Activated B cell treated with CpG ODN at 0.5 μM for 24 hours (primary cell): ENCODE measurements at regions of chr15 and their contacts with region 1.

Region 1: DNA sequence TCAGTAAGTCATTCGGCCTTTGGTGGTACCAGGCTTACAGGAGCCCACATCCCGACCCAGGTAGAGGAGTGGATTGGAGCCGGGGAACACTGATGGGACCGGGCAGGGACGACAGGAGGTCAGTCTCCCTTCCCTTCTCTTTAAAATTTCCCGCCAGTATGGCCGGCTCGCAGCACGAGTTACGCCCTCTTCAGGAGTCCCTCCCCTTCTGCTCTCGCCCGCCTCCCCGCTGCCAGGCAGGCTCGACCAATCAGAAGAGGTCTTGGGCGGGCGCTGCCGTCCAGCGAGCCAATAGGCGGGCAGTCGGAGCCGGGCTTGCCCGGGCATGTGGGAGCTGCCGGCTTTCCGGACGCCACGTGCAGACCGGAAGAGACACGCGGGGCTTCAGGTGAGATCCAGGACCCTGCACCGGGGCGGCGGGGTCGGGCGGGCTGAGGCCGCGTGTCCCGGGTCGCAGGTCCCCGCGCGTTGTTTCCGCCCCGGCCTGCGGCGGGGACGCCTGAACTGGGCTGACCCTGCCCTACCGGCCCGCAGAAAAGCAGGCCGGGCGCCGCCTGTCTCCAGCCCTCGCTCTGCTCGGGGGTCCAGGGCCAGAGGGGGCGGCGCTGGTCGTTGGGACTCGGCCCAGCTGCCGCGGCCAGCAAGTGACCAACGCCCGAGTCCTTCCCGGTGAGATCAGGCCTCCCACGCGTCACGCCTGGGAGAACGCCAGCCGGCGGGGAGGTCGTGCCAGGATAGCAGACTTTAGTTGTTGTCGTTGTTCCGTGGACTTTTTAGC is at the start of gene AEN:
- DNase-seq: peak; percentile 90
- ATAC-seq: peak; percentile 94
- H3K4me3 Mint-ChIP-seq: peak within 1 kb of the TSS; percentile 87
- H3K27ac Mint-ChIP-seq: peak within 1 kb of the TSS; percentile 92
- H3K4me1 Mint-ChIP-seq: peaks cover 50% of the 10 kb centered on the region
- H3K27me3 Mint-ChIP-seq: peaks cover 2% of the 10 kb centered on the region
- CTCF ChIP-seq: no peak
- total RNA-seq, gene AEN: 40.1 and 41.9 TPM in 2 replicates

Region 2: GRCh38 chr15:88476635-88477060 is 144.5 kb before region 1 on chr15:
- CTCF ChIA-PET with region 1: no interaction called
- POLR2A ChIA-PET with region 1: no interaction called
- intact Hi-C with region 1: loop called (anchors 1 kb)
- DNase-seq: no peak
- ATAC-seq: peak; percentile 28
- H3K4me3 Mint-ChIP-seq: no peak overlapping the region
- H3K27ac Mint-ChIP-seq: no peak overlapping the region
- H3K4me1 Mint-ChIP-seq: peaks cover 8% of the 10 kb centered on the region
- H3K27me3 Mint-ChIP-seq: no peaks in the 10 kb centered on the region
- CTCF ChIP-seq: no peak

Region 3: GRCh38 chr15:88657326-88658069 is 36.3 kb after region 1 on chr15:
- CTCF ChIA-PET with region 1: interaction called, 79 read pairs
- POLR2A ChIA-PET with region 1: interaction called, 42 read pairs
- intact Hi-C with region 1: loop called (anchors 2 kb)
- DNase-seq: no peak
- ATAC-seq: peak; percentile 7
- H3K4me3 Mint-ChIP-seq: no peak overlapping the region
- H3K27ac Mint-ChIP-seq: peak overlapping the region; percentile 94
- H3K4me1 Mint-ChIP-seq: peaks cover 75% of the 10 kb centered on the region
- H3K27me3 Mint-ChIP-seq: no peaks in the 10 kb centered on the region
- CTCF ChIP-seq: no peak

Region 4: GRCh38 chr15:88769161-88769971 is 148.2 kb after region 1 on chr15:
- CTCF ChIA-PET with region 1: no interaction called
- POLR2A ChIA-PET with region 1: no interaction called
- intact Hi-C with region 1: no loop called
- DNase-seq: no peak
- ATAC-seq: no peak
- H3K4me3 Mint-ChIP-seq: no peak overlapping the region
- H3K27ac Mint-ChIP-seq: no peak overlapping the region
- H3K4me1 Mint-ChIP-seq: no peaks in the 10 kb centered on the region
- H3K27me3 Mint-ChIP-seq: peaks cover 34% of the 10 kb centered on the region
- CTCF ChIP-seq: no peak

Region 5: DNA sequence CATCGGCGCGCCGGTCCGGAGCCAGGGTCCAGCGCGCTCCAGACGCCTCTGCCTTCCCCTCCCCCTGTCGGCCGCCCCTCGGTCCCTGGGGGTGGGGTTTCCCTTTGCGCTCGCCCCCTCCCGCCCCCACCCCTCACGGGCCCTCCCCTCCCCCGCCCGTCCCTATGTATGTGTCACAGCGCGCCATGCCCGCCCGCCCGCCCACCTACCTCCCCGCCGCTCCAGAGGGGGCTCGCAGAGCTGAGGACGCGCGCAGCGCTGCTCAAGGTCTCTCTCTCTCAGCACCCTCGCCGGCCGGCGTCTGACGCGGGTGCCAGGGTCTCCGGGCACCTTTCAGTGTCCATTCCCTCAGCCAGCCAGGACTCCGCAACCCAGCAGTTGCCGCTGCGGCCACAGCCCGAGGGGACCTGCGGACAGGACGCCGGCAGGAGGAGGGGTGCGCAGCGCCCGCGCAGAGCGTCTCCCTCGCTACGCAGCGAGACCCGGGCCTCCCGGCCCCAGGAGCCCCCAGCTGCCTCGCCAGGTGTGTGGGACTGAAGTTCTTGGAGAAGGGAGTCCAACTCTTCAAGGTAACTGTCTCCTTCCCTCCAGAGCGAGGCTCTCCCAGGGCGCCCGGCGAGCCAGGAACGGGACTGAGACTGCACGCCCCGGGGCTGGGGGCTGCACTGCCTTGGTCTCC is 182.2 kb after region 1 on chr15 and contains the start of gene ACAN:
- CTCF ChIA-PET with region 1: interaction called, 13 read pairs
- POLR2A ChIA-PET with region 1: no interaction called
- intact Hi-C with region 1: no loop called
- DNase-seq: no peak
- ATAC-seq: no peak
- H3K4me3 Mint-ChIP-seq: peak within 1 kb of the TSS; percentile 68
- H3K27ac Mint-ChIP-seq: no peak within 1 kb of the TSS
- H3K4me1 Mint-ChIP-seq: peaks cover 11% of the 10 kb centered on the region
- H3K27me3 Mint-ChIP-seq: peaks cover 59% of the 10 kb centered on the region
- CTCF ChIP-seq: no peak
- total RNA-seq, gene ACAN: not detected in 2 replicates

Region 6: GRCh38 chr15:88904624-88905327 is 283.6 kb after region 1 on chr15:
- CTCF ChIA-PET with region 1: interaction called, 15 read pairs
- POLR2A ChIA-PET with region 1: no interaction called
- intact Hi-C with region 1: loop called (anchors 1 kb)
- DNase-seq: peak; percentile 64
- ATAC-seq: peak; percentile 92
- H3K4me3 Mint-ChIP-seq: no peak overlapping the region
- H3K27ac Mint-ChIP-seq: no peak overlapping the region
- H3K4me1 Mint-ChIP-seq: peaks cover 7% of the 10 kb centered on the region
- H3K27me3 Mint-ChIP-seq: no peaks in the 10 kb centered on the region
- CTCF ChIP-seq: peak; percentile 96

Region 7: DNA sequence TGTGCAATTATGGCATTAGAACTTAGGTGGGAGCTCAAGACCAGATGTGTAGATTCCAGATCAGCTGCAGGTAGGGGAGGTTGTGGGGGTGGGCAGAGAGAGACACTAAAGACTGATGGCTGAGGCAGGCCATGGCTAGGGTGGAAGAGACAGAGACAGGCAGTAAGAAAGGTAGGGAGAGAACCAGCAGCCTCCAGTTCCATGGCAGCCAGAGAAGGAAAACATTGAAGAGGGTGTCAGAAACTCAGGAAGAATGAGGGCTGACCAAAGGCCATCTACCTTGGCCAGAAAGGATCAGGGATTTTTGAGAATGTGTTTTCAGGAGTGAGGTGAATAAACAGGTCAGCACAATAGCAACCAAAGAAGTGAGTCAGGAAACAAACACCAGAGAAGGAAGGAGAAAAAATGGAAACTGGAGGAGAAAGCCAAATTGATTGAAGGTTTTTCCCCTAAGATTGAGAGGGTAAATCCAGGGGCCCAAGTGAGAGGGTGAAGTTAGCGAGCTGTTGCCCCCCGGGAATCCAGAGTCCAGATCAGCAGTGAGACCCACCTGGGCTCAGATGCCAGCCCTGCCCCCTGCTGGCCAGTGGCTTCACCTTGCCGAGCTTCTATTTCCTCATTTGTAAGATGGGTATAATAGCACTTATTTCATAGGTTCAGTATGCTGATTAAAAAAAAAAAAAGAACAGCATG is 508.1 kb after region 1 on chr15:
- CTCF ChIA-PET with region 1: interaction called, 7 read pairs
- POLR2A ChIA-PET with region 1: no interaction called
- intact Hi-C with region 1: loop called (anchors 1 kb)
- DNase-seq: peak; percentile 45
- ATAC-seq: peak; percentile 64
- H3K4me3 Mint-ChIP-seq: no peak overlapping the region
- H3K27ac Mint-ChIP-seq: no peak overlapping the region
- H3K4me1 Mint-ChIP-seq: peaks cover 14% of the 10 kb centered on the region
- H3K27me3 Mint-ChIP-seq: no peaks in the 10 kb centered on the region
- CTCF ChIP-seq: peak; percentile 60